Transverse colon (tissue), 4 donors: ENCODE measurements at regions of chr22 and their contacts with region 1.

Region 1: GRCh38 chr22:27329131-27329850 is 472.3 kb downstream of the MN1 start:
- DNase-seq: no peak
- H3K4me3 ChIP-seq: no peak overlapping the region
- H3K27ac ChIP-seq: no peak overlapping the region
- H3K4me1 ChIP-seq: no peaks in the 10 kb centered on the region
- H3K27me3 ChIP-seq: peaks cover 22% of the 10 kb centered on the region
- CTCF ChIP-seq: no peak
- EP300 ChIP-seq: no peak
- POLR2A ChIP-seq: no peak

Region 2: GRCh38 chr22:27267145-27267544 is 62.1 kb before region 1 on chr22:
- in situ Hi-C with region 1: loop called in 1 of 4 experiments (anchors 10 kb)
- intact Hi-C with region 1: no loop called
- DNase-seq: no peak
- H3K4me3 ChIP-seq: no peak overlapping the region
- H3K27ac ChIP-seq: no peak overlapping the region
- H3K4me1 ChIP-seq: no peaks in the 10 kb centered on the region
- H3K27me3 ChIP-seq: peaks cover 7% of the 10 kb centered on the region
- CTCF ChIP-seq: no peak
- EP300 ChIP-seq: no peak
- POLR2A ChIP-seq: no peak